Endothelial cell of umbilical vein (primary cell): ENCODE measurements at regions of chr12 and their contacts with region 1.

Region 1: DNA sequence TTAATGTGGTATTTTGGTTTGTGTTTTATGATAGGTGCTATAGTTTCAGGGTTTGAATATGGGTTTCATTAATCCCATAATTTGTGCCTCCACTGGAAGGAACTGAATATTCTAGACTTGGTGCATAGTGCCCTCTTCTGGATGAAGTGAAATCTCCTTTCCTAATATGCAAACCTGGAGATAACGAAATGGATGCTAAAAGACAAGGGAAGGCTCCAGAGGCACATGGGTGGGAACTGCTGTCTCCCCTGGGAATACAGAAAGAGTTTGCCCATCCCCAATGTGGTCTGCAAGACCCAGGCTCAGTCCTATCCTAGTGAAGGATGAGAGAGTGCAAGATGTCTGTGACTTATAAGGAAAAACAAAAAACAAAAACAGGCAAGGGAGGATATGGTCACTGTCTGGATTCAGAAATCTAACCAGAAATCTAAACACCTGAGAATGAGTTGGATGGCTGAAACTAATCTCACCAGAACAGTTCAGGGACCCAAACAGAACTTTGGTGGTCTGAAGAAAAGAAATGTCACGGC is 142.3 kb upstream of the TMPO start:
- DNase-seq: peak; percentile 61
- H3K4me3 ChIP-seq: no peak overlapping the region
- H3K27ac ChIP-seq: no peak overlapping the region
- H3K4me1 ChIP-seq: peaks cover 27% of the 10 kb centered on the region
- H3K27me3 ChIP-seq: peaks cover 7 to 9% of the 10 kb centered on the region in 2 experiments
- CTCF ChIP-seq: peak; percentile 46 to 47
- POLR2A ChIP-seq: no peak

Region 2: DNA sequence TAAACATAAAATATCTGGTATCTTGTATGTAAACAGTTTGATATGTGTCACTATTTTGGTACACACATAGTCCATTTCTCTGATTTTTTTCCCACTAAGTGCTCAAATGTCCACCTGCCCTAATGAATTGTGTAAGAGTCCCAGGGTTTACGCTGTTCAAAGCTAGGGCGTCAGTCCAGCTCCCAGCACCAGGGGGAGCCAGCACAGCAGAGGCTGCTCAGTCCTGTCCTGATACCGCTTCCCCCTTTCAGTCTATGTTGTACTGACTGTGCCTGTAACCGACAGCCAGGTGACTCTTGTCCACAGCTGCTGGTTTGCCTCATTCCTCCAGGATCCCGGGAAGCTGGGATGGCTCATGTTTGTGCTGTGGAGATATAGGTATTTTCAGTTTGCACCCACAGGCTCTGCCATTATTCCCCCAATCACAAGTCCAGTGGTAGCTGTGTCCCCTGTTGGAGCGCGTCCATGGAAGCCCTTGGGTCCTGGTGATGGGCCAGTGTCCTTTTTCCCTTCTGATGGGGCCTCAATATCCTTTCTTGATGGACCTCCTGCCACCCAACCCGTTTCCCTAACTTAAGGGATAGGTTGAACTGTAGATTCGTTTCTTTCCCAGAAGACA is 1224.0 kb before region 1 on chr12:
- CTCF ChIA-PET with region 1: interaction called, 15 read pairs
- POLR2A ChIA-PET with region 1: no interaction called
- dilution Hi-C with region 1: no loop called
- intact Hi-C with region 1: loop called (anchors 1 kb)
- DNase-seq: peak; percentile 31
- H3K4me3 ChIP-seq: no peak overlapping the region
- H3K27ac ChIP-seq: no peak overlapping the region
- H3K4me1 ChIP-seq: peaks cover 20% of the 10 kb centered on the region
- H3K27me3 ChIP-seq: no peaks in the 10 kb centered on the region
- CTCF ChIP-seq: peak; percentile 65 to 75
- POLR2A ChIP-seq: no peak

Region 3: DNA sequence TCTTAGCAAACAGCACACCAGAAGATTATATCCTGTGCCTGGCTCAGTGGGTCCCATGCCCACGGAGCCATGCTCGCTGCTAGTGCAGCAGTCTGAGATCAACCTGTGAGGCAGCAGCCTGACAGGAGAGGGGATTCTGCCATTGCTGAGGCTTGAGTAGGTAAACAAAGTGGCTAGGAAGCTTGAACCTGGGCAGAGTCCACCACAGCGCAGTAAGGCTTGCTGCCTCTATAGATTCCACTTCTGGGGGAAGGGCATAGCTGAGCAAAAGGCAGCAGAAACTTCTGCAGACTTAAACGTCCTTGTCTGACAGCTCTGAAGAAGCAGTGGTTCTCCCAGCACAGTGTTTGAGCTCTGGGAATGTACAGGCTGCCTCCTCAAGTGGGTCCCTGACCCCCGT is 700.2 kb before region 1 on chr12:
- CTCF ChIA-PET with region 1: no interaction called
- POLR2A ChIA-PET with region 1: no interaction called
- dilution Hi-C with region 1: no loop called
- intact Hi-C with region 1: loop called (anchors 10 kb)
- DNase-seq: no peak
- H3K4me3 ChIP-seq: no peak overlapping the region
- H3K27ac ChIP-seq: no peak overlapping the region
- H3K4me1 ChIP-seq: no peaks in the 10 kb centered on the region
- H3K27me3 ChIP-seq: no peaks in the 10 kb centered on the region
- CTCF ChIP-seq: no peak
- POLR2A ChIP-seq: no peak

Region 4: DNA sequence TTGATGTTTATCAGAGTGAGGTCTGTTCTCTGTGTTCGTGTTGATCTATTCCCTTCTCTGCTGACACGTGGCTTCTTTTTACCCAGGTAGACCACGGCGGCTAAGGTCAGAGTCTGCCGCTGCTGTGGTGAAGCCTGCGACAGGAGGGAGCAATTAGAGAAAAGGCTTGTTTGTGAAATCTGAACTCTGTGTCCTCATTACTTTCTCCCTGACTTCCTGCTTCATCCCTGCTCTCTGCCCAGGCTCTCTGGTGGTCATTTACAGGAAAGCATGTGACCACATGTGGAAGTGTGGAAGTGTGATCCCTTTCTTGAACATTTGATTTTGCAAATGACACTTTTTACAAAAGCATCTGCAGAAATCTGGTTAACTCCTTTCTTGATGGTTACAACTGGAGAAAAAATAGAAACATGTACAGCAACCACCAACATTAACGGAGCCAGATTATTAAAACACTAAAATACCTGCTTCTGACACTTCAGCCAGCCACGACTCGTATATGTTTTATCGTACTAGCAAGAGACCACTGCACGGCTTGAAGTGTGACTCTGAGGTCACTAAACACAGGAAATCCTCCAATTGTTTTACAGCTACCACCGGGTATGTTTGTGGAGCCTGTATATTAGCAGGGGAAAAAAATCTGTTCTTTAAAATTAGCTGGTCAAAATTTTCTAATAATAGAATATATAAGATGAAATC is 246.3 kb before region 1 on chr12:
- CTCF ChIA-PET with region 1: no interaction called
- POLR2A ChIA-PET with region 1: no interaction called
- dilution Hi-C with region 1: no loop called
- intact Hi-C with region 1: loop called (anchors 2 kb)
- DNase-seq: peak; percentile 82
- H3K4me3 ChIP-seq: peak overlapping the region in 1 of 3 experiments; percentile 30
- H3K27ac ChIP-seq: peak overlapping the region; percentile 95
- H3K4me1 ChIP-seq: peaks cover 22% of the 10 kb centered on the region
- H3K27me3 ChIP-seq: no peaks in the 10 kb centered on the region
- CTCF ChIP-seq: no peak
- POLR2A ChIP-seq: no peak

Region 5: DNA sequence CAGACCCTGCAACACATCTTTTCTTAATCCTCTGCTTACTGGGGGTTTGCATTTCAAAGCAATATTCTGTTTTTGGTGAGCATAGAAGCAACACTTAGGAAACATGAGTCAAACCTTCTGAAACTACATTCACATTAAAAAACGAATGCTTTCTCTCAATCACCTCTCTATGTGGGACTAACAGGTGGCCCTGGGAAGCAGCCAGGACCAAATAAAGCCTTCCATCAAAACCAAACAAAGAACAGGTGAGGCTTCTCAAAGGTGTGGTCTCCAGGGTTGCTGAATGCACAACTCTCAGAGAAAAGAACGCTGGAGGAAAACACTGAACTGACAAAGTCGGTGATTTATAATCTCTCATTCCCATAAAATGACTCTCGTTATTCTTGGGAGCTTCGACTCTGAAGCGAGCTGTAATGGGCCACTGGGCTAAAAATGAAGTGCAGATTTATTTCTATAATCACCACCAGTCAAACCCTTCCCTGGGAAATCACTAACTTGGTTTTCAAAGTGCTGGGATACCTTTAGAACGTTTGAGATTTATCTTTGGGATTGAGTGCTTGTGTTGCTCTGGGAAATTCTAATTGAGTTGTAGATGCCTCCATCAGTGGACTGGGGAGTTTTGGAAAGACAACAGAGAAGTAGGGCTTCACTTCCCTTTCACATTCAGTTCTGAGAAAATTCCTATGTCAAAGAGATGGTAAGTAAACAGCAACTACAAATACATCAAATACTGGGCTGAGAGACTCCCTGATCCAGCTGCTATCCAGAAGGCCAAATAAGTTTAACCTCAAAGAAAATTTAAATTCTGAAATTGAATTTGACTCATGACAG is 119.7 kb before region 1 on chr12:
- CTCF ChIA-PET with region 1: no interaction called
- POLR2A ChIA-PET with region 1: no interaction called
- dilution Hi-C with region 1: no loop called
- intact Hi-C with region 1: no loop called
- DNase-seq: no peak
- H3K4me3 ChIP-seq: no peak overlapping the region
- H3K27ac ChIP-seq: no peak overlapping the region
- H3K4me1 ChIP-seq: no peaks in the 10 kb centered on the region
- H3K27me3 ChIP-seq: no peaks in the 10 kb centered on the region
- CTCF ChIP-seq: no peak
- POLR2A ChIP-seq: no peak

Region 6: GRCh38 chr12:98352218-98352811 is 20.8 kb before region 1 on chr12:
- CTCF ChIA-PET with region 1: interaction called, 4 read pairs
- POLR2A ChIA-PET with region 1: interaction called, 3 read pairs
- dilution Hi-C with region 1: no loop called
- intact Hi-C with region 1: loop called (anchors 1 kb)
- DNase-seq: peak; percentile 84
- H3K4me3 ChIP-seq: no peak overlapping the region
- H3K27ac ChIP-seq: peak overlapping the region; percentile 69
- H3K4me1 ChIP-seq: peaks cover 15% of the 10 kb centered on the region
- H3K27me3 ChIP-seq: no peaks in the 10 kb centered on the region
- CTCF ChIP-seq: no peak
- POLR2A ChIP-seq: no peak

Region 7: DNA sequence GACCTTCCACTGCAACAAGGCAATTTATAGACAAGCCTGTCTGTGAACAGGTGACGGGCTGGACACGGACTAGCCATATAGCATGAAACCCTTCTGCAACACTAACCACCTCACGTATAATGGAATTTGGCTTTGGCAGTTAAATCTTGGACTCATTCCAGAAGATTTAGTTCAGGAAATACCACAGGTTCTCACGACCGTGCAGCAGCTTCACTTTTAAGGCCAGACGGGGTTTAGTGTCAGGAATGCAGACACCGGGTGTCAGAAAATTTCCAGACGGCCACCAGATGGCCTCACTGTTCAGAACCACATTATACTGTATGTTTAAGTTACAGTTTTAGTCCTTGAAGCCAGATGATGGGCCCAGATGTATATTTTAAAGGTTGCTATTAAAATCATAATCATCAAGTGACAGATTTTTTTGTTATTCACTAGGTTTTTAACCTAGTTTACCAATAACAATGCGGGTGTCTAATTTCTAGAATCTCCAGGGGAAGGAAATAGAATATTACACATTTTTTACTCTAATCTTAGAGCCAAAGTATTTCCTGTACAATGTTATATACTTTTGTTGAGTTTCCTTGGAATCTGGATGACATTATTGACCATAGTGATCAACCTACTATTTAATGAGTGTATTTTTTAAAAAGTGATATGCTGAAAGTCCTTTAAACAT is 51.8 kb after region 1 on chr12:
- CTCF ChIA-PET with region 1: interaction called, 3 read pairs
- POLR2A ChIA-PET with region 1: no interaction called
- dilution Hi-C with region 1: no loop called
- intact Hi-C with region 1: loop called (anchors 1 kb)
- DNase-seq: peak; percentile 94
- H3K4me3 ChIP-seq: peak overlapping the region in 1 of 3 experiments; percentile 14
- H3K27ac ChIP-seq: peak overlapping the region; percentile 54
- H3K4me1 ChIP-seq: peaks cover 15% of the 10 kb centered on the region
- H3K27me3 ChIP-seq: no peaks in the 10 kb centered on the region
- CTCF ChIP-seq: peak; percentile 65 to 68
- POLR2A ChIP-seq: no peak